Sigmoid colon (tissue), 7 donors: ENCODE measurements at regions of chr12 and their contacts with region 1.

Region 1: DNA sequence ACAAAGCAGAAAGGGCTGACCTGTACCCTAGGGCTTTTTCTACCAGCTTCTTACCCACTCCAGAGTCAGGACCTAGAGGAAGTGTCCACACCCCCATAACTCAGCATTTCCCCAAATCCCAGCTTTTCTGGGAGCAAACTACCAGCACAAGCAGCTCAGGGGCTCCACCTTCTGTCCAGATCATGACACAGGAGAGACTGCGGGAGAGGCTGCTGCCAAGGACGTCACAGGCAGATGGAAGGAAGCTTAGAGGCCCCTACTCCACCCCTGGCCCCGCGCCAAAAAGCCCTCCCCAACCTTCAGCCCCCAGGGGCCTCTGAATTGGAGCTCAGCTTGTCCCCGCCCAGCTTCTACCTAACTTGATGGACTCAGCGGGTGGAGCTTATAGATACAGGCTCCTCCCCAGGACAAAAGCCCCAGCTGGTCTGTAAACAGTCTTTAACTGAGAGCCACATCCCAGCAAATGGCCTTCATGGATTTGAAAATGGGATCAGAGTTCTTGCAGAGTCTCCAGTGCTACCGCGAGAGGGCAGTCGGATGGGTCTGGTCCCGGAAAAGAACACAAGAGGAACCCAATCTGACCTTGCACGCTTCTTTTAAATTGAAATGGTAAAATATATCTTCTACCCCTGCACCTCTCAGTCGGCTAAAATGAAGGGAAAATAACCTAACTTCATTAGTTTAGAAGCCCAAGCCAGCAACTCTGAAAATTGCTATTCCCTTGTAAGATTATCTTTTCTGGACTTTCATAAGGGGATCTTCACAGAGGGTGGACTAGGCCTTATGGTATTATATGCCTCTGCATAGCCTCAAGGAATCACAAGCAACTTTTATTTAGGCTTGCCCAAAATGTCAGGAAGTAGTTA is 6.8 kb upstream of the BAZ2A start:
- DNase-seq: peak; percentile 100
- H3K4me3 ChIP-seq: peak overlapping the region; percentile 76 to 91 (median 84)
- H3K27ac ChIP-seq: peak overlapping the region; percentile 90 to 98 (median 94)
- H3K4me1 ChIP-seq: peaks cover 0 to 54% (median 46%) of the 10 kb centered on the region in 4 donors
- H3K27me3 ChIP-seq: no peaks in the 10 kb centered on the region
- CTCF ChIP-seq: peak in 3 of 4 experiments; percentile 15 to 57 (median 53)
- EP300 ChIP-seq: no peak
- POLR2A ChIP-seq: no peak

Region 2: GRCh38 chr12:56521590-56522371 is 115.1 kb before region 1 on chr12 and contains the start of gene RBMS2:
- intact Hi-C with region 1: loop called (anchors 2 kb)
- DNase-seq: peak; percentile 95
- H3K4me3 ChIP-seq: peak within 1 kb of the TSS; percentile 53 to 68 (median 60)
- H3K27ac ChIP-seq: peak within 1 kb of the TSS; percentile 90 to 94 (median 92)
- H3K4me1 ChIP-seq: peaks cover 0 to 54% (median 47%) of the 10 kb centered on the region in 4 donors
- H3K27me3 ChIP-seq: no peaks in the 10 kb centered on the region
- CTCF ChIP-seq: no peak
- EP300 ChIP-seq: peak in 1 of 4 donors; percentile 6
- POLR2A ChIP-seq: peak; percentile 7 to 14
- total RNA-seq, gene RBMS2: 20.6 to 33.0 (median 23.1) TPM

Region 3: DNA sequence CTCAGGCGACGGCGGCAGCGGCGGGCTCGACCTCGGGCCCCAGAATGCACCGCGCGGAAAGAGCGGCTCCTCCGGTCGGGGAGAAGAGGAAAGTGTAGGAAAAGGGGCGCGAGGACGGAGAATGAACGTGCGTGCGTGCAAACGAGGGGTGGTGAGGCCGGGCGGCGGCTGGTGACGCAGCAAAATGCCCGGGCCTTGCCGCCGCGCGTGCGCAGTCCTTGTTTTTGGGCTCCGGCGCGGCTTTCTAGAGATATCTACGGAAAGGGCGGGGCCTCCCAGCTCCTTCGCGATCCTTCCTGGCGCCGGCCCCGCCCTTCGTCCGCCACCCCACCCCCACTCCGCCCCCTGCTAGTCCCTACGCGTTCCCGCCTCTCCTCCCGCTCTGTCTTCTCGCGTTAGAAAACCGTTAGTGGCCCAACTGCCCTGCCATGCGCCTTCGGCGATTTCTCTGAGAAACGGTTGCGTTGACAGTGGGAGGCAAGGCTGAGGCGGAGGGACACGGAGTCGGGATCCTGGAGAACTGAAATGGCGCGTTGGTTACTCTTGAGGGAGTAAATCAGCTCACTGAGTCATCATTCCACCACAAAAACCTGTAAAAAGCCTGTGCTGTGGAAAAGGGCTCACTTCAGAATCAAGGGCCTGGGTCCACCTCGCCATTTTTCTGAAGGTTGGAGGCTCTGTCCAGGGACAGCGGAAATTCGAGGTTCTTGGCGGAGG is 51.4 kb after region 1 on chr12 and contains the start of gene PTGES3:
- intact Hi-C with region 1: loop called (anchors 2 kb)
- DNase-seq: peak; percentile 99
- H3K4me3 ChIP-seq: peak within 1 kb of the TSS; percentile 63 to 97 (median 85)
- H3K27ac ChIP-seq: peak within 1 kb of the TSS; percentile 97 to 100 (median 98)
- H3K4me1 ChIP-seq: peaks cover 0 to 41% (median 33%) of the 10 kb centered on the region in 4 donors
- H3K27me3 ChIP-seq: no peaks in the 10 kb centered on the region
- CTCF ChIP-seq: no peak
- EP300 ChIP-seq: peak in 1 of 4 donors; percentile 93
- POLR2A ChIP-seq: peak; percentile 91 to 95
- total RNA-seq, gene PTGES3: 92.8 to 156 (median 120) TPM

Region 4: GRCh38 chr12:56724972-56725722 is 88.2 kb after region 1 on chr12 and contains the start of gene NACA:
- intact Hi-C with region 1: loop called (anchors 2 kb)
- DNase-seq: peak; percentile 99
- H3K4me3 ChIP-seq: peak within 1 kb of the TSS; percentile 59 to 97 (median 68)
- H3K27ac ChIP-seq: peak within 1 kb of the TSS; percentile 88 to 96 (median 90)
- H3K4me1 ChIP-seq: peaks cover 0 to 47% (median 41%) of the 10 kb centered on the region in 4 donors
- H3K27me3 ChIP-seq: no peaks in the 10 kb centered on the region
- CTCF ChIP-seq: no peak
- EP300 ChIP-seq: peak in 2 of 4 donors; percentile 5 to 40
- POLR2A ChIP-seq: peak; percentile 96 to 98
- total RNA-seq, gene NACA: 1,056 to 1,536 (median 1,356) TPM

Region 5: GRCh38 chr12:56763753-56764657 is 127.1 kb after region 1 on chr12:
- intact Hi-C with region 1: no loop called
- DNase-seq: no peak
- H3K4me3 ChIP-seq: peak overlapping the region; percentile 38 to 46 (median 44)
- H3K27ac ChIP-seq: peak overlapping the region in 3 of 4 donors; percentile 79 to 84 (median 83)
- H3K4me1 ChIP-seq: peaks cover 0 to 37% (median 32%) of the 10 kb centered on the region in 4 donors
- H3K27me3 ChIP-seq: no peaks in the 10 kb centered on the region
- CTCF ChIP-seq: no peak
- EP300 ChIP-seq: no peak
- POLR2A ChIP-seq: no peak

Region 6: DNA sequence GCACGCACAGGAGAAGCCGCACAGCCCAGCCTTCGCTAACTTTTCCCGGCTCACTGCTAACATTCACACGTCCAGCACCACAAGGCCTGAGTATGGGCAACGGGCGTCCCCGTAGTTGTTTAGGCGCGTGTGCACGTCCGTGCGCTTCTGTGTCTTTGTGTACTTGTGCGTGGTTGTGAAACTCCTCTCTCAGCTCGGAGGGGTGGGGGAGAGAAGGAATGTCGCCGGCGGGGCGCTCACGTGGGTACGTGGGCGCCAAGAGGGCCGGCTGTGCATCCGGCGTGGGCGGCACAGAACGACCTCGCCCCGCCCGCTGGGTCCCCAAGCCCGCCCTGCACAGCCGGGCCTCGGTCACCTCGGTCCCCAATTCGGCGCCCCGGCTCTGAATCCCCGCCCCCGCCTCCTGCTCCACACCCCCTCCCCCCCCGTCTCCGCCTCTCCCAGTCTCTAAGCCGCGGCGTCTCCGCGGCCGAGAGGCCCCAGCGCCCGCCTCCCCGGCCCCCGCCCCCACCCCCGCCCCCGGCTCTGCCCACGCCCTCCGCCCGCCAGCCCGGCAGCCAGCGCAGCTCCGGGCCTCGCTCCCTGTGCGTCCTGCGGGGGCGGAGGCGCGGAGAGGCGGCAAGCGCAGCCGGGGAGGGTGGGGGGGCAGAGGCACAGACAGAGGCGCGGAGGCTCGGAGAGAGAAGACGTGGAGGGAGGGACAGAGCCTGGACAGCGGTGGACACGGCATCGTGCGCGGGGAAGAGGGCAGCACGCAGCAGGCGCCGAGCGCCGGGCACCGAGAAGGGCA is 451.7 kb after region 1 on chr12 and contains the start of gene NAB2:
- intact Hi-C with region 1: loop called (anchors 5 kb)
- DNase-seq: peak; percentile 99
- H3K4me3 ChIP-seq: peak within 1 kb of the TSS; percentile 75 to 96 (median 88)
- H3K27ac ChIP-seq: peak within 1 kb of the TSS; percentile 97 to 100 (median 99)
- H3K4me1 ChIP-seq: peaks cover 0 to 62% (median 51%) of the 10 kb centered on the region in 4 donors
- H3K27me3 ChIP-seq: no peaks in the 10 kb centered on the region
- CTCF ChIP-seq: no peak
- EP300 ChIP-seq: peak in 2 of 4 donors; percentile 53 to 60
- POLR2A ChIP-seq: peak; percentile 79 to 86
- total RNA-seq, gene NAB2: 24.8 to 28.9 (median 27.4) TPM